Endothelial cell of umbilical vein (primary cell): ENCODE measurements at regions of chr10 and their contacts with region 1.

Region 1: DNA sequence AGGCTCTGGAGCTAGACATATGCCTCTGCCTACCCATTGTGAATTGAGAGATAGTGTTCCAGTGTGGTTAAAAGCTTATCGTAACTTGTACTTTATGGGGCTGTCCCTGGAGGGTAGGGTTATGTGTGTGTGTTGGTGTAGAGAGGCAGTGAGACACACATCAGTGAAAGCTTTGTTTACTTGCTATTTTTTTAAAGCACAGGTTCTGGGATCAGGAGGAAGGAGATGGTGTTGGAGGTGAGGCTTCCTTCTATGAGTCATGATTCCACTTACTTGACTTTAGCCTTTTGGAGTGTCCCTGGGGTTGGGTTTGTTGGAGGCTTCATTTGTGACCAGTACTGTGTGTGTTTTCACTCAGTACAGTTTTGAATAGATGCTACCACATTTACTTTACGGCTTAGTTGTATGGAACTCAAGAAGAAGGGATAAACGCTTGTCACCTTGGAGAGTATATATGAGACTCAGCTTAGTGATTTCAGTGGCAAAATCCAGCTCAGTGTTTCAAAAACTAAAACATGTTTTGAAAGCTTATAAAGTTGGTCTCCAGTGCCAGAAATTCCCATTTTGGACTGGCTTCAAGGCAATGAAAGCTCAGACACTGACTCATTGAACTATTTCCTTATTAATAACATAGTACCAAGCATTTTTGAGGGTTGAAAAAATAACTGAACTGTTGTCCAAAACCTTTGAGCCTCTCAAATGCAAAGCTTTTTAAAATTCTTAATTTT is 106.2 kb downstream of the PLXDC2 start:
- DNase-seq: peak; percentile 76
- H3K4me3 ChIP-seq: peak overlapping the region in 1 of 3 experiments; percentile 19
- H3K27ac ChIP-seq: peak overlapping the region; percentile 81
- H3K4me1 ChIP-seq: peaks cover 18% of the 10 kb centered on the region
- H3K27me3 ChIP-seq: no peaks in the 10 kb centered on the region
- CTCF ChIP-seq: no peak
- POLR2A ChIP-seq: no peak

Region 2: GRCh38 chr10:20004087-20004523 is 81.7 kb after region 1 on chr10:
- CTCF ChIA-PET with region 1: no interaction called
- POLR2A ChIA-PET with region 1: no interaction called
- dilution Hi-C with region 1: no loop called
- intact Hi-C with region 1: loop called (anchors 5 kb)
- DNase-seq: no peak
- H3K4me3 ChIP-seq: no peak overlapping the region
- H3K27ac ChIP-seq: no peak overlapping the region
- H3K4me1 ChIP-seq: no peaks in the 10 kb centered on the region
- H3K27me3 ChIP-seq: no peaks in the 10 kb centered on the region
- CTCF ChIP-seq: no peak
- POLR2A ChIP-seq: no peak